Activated CD8-positive, alpha-beta T cell treated with anti-CD3 and anti-CD28 coated beads, Interleukin-2, amount 10 ng/mL, durations not matched to agents 7 days and 5 days (primary cell): ENCODE measurements at regions of chr3 and their contacts with region 1.

Region 1: DNA sequence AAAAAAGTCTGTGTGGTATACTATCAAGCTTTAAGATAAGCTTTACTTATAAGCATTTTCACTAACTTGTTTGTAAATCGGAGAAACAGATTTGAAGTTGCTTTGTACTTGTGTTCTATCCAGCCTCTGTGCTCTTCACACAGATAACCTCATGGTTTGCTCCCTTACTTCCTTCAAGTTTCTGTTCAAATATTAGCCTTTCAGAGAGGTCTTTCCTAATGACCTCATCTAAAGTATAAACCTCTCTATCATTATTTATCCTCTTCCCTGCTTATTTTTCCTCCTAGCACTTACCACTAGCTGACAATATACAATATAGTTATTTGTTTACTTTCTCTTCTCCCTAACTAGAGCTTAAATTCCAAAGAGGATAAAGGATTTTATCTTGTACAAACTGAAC is 180.0 kb downstream of the CBLB start:
- DNase-seq: no peak
- ATAC-seq: no peak
- H3K4me3 Mint-ChIP-seq: no peak overlapping the region
- H3K27ac Mint-ChIP-seq: peak overlapping the region; percentile 40
- H3K4me1 Mint-ChIP-seq: peaks cover 38% of the 10 kb centered on the region
- H3K27me3 Mint-ChIP-seq: no peaks in the 10 kb centered on the region

Region 2: GRCh38 chr3:105868742-105869530 is 180.1 kb after region 1 on chr3 and contains the start of gene CBLB:
- CTCF ChIA-PET with region 1: interaction called, 10 read pairs
- POLR2A ChIA-PET with region 1: no interaction called
- DNase-seq: peak; percentile 89
- ATAC-seq: peak; percentile 90
- H3K4me3 Mint-ChIP-seq: peak within 1 kb of the TSS; percentile 96
- H3K27ac Mint-ChIP-seq: peak within 1 kb of the TSS; percentile 90
- H3K4me1 Mint-ChIP-seq: peaks cover 40% of the 10 kb centered on the region
- H3K27me3 Mint-ChIP-seq: no peaks in the 10 kb centered on the region
- total RNA-seq, gene CBLB: 117 to 122 TPM

Region 3: GRCh38 chr3:106609666-106610301 is 921.0 kb after region 1 on chr3:
- CTCF ChIA-PET with region 1: interaction called, 11 read pairs
- POLR2A ChIA-PET with region 1: no interaction called
- DNase-seq: peak; percentile 77
- ATAC-seq: peak; percentile 79
- H3K4me3 Mint-ChIP-seq: no peak overlapping the region
- H3K27ac Mint-ChIP-seq: no peak overlapping the region
- H3K4me1 Mint-ChIP-seq: peaks cover 8% of the 10 kb centered on the region
- H3K27me3 Mint-ChIP-seq: no peaks in the 10 kb centered on the region